MCF 10A (cell line): ENCODE measurements at regions of chr7 and their contacts with region 1.

Region 1: GRCh38 chr7:43764039-43764761 is 5.7 kb downstream of the BLVRA start:
- DNase-seq: peak; percentile 77
- H3K4me3 Mint-ChIP-seq: peak overlapping the region; percentile 62
- H3K27ac Mint-ChIP-seq: peak overlapping the region; percentile 81
- H3K4me1 Mint-ChIP-seq: peaks cover 36% of the 10 kb centered on the region
- H3K27me3 Mint-ChIP-seq: no peaks in the 10 kb centered on the region
- CTCF ChIP-seq: no peak

Region 2: GRCh38 chr7:42931834-42932651 is 832.2 kb before region 1 on chr7 and contains the starts of genes MRPL32 and PSMA2:
- CTCF ChIA-PET with region 1: no interaction called
- POLR2A ChIA-PET with region 1: interaction called, 10 read pairs
- intact Hi-C with region 1: no loop called
- DNase-seq: peak; percentile 98
- H3K4me3 Mint-ChIP-seq: peak within 1 kb of the TSS; percentile 100
- H3K27ac Mint-ChIP-seq: peak within 1 kb of the TSS; percentile 99
- H3K4me1 Mint-ChIP-seq: peaks cover 26% of the 10 kb centered on the region
- H3K27me3 Mint-ChIP-seq: no peaks in the 10 kb centered on the region
- CTCF ChIP-seq: no peak
- total RNA-seq, gene MRPL32: 69.8 and 82.0 TPM in 2 replicates
- total RNA-seq, gene PSMA2: 65.5 and 73.8 TPM in 2 replicates

Region 3: DNA sequence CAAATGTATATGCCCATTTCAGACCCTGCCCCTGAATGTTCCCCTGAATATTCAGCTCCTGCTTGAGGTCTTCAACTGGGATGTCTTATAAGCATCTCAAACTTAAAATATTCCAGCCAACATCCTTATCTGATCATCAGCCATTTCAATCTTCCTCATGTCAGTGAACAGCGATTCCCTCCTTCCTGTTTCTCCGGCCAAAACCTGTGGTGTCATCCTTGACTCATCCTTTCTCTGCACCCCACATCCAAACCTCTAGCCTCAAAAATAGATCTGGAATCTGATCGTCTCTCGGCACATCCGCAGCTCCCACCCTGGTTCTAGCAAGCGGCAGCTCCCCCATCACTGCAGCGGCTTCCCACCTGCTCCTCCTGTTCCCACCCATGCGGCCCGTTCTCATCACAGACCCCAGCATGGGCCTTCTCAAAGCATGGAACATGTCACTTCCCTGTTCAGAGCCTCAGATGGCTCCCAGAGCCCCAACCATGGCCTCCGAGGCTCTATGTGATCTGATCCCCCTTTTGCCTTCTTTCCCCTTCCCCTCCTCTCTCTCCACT is 486.0 kb before region 1 on chr7:
- CTCF ChIA-PET with region 1: no interaction called
- POLR2A ChIA-PET with region 1: no interaction called
- intact Hi-C with region 1: no loop called
- DNase-seq: peak; percentile 13
- H3K4me3 Mint-ChIP-seq: no peak overlapping the region
- H3K27ac Mint-ChIP-seq: no peak overlapping the region
- H3K4me1 Mint-ChIP-seq: peaks cover 7% of the 10 kb centered on the region
- H3K27me3 Mint-ChIP-seq: no peaks in the 10 kb centered on the region
- CTCF ChIP-seq: no peak

Region 4: GRCh38 chr7:43612599-43613589 is 151.3 kb before region 1 on chr7:
- CTCF ChIA-PET with region 1: no interaction called
- POLR2A ChIA-PET with region 1: no interaction called
- intact Hi-C with region 1: no loop called
- DNase-seq: no peak
- H3K4me3 Mint-ChIP-seq: no peak overlapping the region
- H3K27ac Mint-ChIP-seq: no peak overlapping the region
- H3K4me1 Mint-ChIP-seq: peaks cover 5% of the 10 kb centered on the region
- H3K27me3 Mint-ChIP-seq: no peaks in the 10 kb centered on the region
- CTCF ChIP-seq: no peak

Region 5: DNA sequence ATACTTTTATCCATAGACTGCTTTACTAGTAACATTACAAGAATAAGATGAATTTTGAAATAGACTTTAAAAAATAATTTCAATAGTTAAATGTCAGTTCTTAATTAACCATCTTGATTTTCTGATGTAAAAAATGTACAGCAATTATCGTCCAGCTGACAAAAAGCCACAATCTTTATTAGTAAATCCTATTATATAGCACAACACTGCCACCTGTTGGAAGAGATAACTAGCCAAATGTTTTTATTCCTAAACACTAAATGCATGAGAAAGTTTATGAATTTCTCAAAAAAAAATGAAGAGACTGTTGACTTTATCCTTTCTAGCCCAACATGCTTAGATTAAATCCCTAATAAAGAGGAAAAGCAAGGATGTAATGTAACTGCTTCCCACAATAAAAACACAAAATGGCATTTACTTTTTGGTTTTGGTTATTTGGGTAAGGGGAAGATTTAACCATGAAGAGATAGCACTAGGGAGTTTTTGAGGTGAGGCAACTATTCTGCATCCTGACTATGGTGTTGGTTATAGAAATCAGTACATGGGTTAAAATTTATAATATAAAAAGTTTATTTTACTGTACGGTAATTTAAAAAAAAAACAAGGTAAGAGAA is 42.9 kb before region 1 on chr7:
- CTCF ChIA-PET with region 1: interaction called, 4 read pairs
- POLR2A ChIA-PET with region 1: interaction called, 10 read pairs
- intact Hi-C with region 1: no loop called
- DNase-seq: peak; percentile 70
- H3K4me3 Mint-ChIP-seq: no peak overlapping the region
- H3K27ac Mint-ChIP-seq: no peak overlapping the region
- H3K4me1 Mint-ChIP-seq: peaks cover 15% of the 10 kb centered on the region
- H3K27me3 Mint-ChIP-seq: no peaks in the 10 kb centered on the region
- CTCF ChIP-seq: peak; percentile 49

Region 6: DNA sequence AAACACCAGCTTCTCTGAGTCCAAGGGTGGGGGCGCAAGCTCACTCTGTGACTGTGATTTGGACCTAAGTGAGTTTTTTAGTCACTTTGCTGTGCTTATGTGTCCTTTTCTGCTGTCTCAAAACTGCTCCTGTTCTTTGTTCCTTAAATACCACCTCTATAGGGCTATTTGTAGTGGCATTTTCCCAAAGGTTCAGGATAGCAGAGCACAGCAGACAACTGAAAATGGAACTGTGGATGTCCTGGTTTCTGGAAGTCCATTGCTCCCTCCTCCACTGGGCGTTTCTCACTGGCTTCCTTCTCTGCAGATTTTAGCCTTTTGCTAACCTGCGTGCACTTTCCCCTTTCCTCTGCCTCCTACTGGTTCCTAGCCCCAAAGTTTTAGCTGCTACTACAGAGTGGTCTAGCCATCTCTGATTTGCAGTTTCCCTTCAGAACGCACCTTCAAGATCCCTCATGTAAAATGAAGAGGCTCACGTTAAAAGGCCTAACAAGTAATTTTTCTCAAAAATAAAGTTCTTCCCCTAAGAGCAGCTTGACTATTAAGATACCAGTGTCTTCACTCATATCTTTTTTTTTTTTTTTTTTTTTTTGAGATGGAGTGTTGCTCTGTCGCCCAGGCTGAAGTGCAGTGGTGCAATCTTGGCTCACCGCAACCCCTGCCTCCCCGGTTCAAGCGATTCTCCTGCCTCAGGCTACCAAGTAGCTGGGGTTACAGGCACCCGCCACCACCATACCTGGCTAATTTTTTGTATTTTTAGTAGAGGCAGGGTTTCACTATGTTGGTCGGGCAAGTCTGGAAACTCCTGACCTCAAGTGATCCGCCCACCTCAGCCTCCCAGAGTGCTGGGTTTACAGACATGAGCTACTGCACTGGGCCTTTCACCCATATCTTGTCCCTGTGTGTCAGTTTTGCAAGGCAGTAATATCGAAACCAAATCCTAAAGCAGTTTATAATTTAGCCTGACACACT is 20.1 kb after region 1 on chr7:
- CTCF ChIA-PET with region 1: interaction called, 7 read pairs
- POLR2A ChIA-PET with region 1: interaction called, 132 read pairs
- intact Hi-C with region 1: no loop called
- DNase-seq: no peak
- H3K4me3 Mint-ChIP-seq: no peak overlapping the region
- H3K27ac Mint-ChIP-seq: no peak overlapping the region
- H3K4me1 Mint-ChIP-seq: peaks cover 24% of the 10 kb centered on the region
- H3K27me3 Mint-ChIP-seq: no peaks in the 10 kb centered on the region
- CTCF ChIP-seq: no peak

Region 7: GRCh38 chr7:43869006-43869866 is 105.0 kb after region 1 on chr7 and contains the start of gene MRPS24:
- CTCF ChIA-PET with region 1: interaction called, 3 read pairs
- POLR2A ChIA-PET with region 1: interaction called, 13 read pairs
- intact Hi-C with region 1: no loop called
- DNase-seq: peak; percentile 93
- H3K4me3 Mint-ChIP-seq: peak within 1 kb of the TSS; percentile 91
- H3K27ac Mint-ChIP-seq: peak within 1 kb of the TSS; percentile 99
- H3K4me1 Mint-ChIP-seq: peaks cover 35% of the 10 kb centered on the region
- H3K27me3 Mint-ChIP-seq: no peaks in the 10 kb centered on the region
- CTCF ChIP-seq: no peak
- total RNA-seq, gene MRPS24: 176 and 188 TPM in 2 replicates